ENCODE measurements at regions of chr16 and their contacts with region 1.

Region 1: GRCh38 chr16:2867987-2868789 is 10.2 kb upstream of the PRSS22 start:
- DNase-seq: peak; percentile 96

Region 2: DNA sequence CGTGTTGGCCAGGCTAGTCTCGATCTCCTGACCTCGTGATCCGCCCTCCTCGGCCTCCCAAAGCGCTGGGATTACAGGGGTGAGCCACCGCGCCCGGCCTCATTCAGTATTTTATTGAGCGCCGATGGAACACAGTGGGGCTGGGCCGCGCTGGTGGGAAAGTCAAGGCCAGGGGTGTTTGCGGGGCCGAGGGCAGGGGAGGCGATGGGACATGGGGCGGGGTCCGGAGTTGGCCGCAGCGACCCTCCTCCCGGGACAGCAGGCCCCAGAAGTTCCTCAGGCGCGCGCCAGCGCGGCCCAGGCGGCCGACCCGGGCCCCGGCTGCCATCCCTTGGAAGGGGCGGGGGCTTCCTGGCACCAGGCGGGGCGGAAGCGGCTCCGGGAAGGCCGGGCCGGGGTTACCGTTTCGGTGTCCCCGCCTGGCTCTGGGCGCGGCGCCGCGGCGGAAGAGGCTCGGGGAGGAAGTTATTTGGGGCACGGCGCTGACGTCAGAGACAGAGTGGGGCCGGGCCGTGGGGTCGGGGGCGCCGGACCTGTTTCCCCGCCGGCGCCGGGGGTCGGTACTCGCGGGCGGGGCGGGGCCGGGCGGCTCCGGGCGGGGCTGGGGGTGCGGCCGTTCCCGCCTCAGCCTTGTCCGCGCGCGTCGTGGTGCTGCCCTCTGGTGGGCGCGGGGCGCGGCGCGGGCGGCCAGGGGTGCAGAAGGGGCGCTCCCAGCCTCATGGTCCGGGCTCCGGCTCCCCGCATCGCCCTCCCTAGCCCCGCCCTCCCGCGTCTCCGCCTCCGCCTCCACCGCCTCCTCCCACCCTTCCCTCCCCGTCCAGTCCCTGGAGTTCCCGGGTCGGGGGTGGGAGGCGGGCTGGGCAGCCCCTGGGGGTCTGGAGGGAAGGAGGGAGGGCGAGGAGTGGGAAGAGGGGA is 147.2 kb before region 1 on chr16:
- intact Hi-C with region 1: loop called (anchors 10 kb)
- DNase-seq: peak; percentile 87

Region 3: DNA sequence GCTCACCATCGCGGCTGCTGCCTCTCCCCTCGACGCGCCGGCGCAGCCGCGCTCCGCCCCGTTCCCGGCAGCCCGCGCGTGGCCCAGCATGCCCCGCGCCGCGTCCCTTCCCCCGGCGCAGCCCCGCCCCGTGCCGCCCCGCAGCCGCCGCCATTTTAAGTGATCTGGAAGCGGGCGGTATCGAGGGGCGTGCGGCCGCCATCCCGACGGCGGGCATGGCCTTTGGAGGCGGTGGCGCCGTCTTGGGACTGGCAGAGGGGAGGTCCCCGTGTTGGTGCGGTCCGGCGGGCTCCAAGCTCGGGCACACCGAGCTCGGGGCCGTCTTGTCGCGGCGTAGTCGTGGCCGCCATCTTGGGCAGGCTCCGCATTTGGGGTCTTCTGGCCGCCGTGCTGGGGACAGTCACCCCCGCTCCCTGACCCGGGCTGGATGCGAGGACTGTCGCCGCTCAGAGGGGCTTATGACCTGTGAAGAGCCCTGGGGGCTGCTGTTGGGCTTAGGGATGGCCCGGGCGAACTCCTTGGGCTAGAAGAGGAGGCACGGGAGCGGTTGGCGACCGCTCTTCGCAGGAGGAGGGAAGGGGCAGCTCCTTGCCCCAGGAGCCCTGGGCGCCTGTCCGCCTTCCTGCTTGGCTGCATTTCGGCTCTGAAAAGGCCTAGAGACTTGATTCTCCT is 90.8 kb before region 1 on chr16 and contains the start of gene ELOB:
- intact Hi-C with region 1: loop called (anchors 5 kb)
- DNase-seq: peak; percentile 95
- total RNA-seq, gene ELOB: 278 TPM

Region 4: GRCh38 chr16:2811703-2812471 is 56.3 kb before region 1 on chr16:
- intact Hi-C with region 1: no loop called
- DNase-seq: no peak

Region 5: DNA sequence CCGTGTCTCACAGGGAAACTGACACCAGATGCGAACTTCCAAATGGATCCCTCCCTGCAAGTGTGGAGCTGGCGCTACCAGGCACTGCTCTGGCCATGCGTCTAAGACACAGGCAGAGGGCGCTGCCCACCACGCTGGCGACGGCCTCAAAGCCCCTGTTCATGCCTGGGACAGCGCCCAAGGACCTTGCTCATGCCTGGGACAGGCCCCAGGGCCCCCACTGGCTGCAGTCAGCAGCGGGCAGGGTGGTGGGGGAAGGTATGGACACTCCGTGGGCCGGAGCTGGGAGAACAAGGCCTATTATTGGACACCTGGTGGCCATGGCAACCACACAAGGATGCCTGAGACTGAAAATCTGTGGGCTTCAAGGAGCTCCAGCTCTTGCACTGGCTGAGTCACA is 29.3 kb before region 1 on chr16:
- intact Hi-C with region 1: loop called (anchors 1 kb)
- DNase-seq: no peak

Region 6: DNA sequence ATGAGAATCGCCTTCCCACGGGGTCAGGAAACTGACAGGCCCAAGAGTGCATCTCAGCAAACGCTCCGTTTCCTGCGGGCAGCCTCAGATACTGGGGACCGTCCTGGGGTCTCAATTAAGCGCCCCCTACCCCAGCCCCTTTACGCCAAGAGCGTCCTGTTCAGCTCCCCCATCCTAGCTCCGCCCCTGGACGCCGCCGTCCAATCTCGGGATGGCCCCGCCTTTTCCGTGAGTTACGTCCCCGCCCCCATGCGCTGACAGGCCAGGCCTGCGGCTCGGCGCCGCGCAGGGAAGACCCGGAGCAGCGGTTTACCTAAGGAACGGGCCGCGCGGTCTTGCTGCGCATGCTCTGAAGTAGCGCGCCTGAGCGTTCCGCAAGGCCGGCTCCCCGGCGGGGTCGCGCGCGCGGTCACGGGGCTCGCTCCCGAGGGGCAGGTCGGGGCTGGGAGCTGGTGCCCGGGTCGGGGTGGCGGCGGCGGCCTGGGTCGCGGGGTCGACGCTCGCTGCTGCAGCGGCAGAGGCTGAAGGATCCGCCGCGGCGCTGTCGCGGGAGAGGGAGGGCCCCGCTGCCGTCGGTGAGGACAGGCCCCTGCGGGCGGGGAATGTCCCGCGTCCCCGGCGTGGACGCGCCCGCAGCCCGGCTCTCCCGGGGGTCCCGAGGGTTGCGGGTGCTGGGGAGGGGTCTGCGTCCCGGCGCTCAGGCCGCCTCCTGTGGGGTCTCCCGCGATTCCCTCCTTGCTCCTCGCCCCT is 43.6 kb after region 1 on chr16 and contains the start of gene FLYWCH1:
- intact Hi-C with region 1: loop called (anchors 5 kb)
- DNase-seq: peak; percentile 99
- total RNA-seq, gene FLYWCH1: 43.5 TPM

Region 7: DNA sequence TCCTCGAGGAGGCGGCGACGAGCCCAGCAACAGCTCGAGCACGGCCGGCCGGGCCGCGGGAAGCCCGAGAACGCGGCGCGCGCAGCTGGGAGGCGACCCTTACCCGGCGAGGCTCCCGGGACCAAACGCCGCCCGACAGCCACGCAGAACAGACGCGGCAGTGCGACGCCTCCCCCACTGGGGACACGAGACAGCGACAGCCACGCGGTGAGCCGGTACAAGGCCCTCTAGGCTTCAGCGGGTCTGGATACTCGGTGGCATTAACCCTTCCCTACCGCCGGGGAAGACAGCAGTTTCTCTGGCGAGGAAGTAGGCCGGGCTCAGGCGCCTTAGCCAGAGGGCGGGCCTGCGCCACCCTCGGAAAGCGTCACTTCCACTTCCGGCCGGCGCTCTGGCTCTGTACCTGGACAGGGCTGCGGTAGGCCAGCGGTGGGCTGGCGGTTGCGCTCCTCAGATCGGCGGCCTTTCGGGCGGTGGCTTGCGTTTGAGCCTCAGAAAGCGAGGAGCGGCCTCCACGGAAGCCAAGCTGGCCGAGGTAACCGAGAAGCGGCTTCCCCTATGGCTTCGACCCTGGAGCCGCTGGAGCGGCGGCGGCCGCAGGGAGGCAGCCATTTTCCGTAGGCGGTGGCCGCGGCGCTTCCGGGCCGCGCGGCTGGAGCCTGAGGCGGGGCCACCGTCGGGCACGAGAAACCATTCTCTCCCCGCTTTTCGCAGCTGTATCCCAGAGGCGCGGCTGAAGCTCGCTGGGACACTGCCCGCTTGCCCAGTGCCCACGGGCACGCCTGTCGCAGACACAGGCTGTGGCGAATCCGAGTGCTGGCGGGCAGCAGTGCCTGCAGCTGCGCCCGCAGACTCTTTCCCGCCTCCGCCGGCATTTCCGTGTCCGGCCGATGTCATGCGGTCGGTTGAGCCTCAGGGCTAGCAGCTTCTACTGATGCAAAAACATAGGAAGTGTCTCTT is 437.2 kb after region 1 on chr16 and contains the starts of genes TIGD7 and ZNF75A:
- intact Hi-C with region 1: no loop called
- DNase-seq: peak; percentile 97
- total RNA-seq, gene TIGD7: 8.2 TPM
- total RNA-seq, gene ZNF75A: 21.3 TPM

Measured in cardiac septum (tissue), 1 donor.